H1 (cell line): ENCODE measurements at regions of chr20 and their contacts with region 1.

Region 1: GRCh38 chr20:49610701-49611538 is 43.0 kb upstream of the PTGIS start:
- DNase-seq: peak; percentile 73 to 97
- H3K4me3 ChIP-seq: peak overlapping the region; percentile 8 to 53 (median 46); a peak in 7 of 8 replicates
- H3K27ac ChIP-seq: no peak overlapping the region
- H3K4me1 ChIP-seq: peaks cover 0 to 5% (median 2%) of the 10 kb centered on the region in 4 experiments; a peak in 1 of 7 replicates
- H3K27me3 ChIP-seq: no peaks in the 10 kb centered on the region
- CTCF ChIP-seq: peak; percentile 86 to 99 (median 95)
- EP300 ChIP-seq: 0 out of 3 replicates have a peak, but pooled peaks of 1 of the 2 experiments have one; percentile 31
- POLR2A ChIP-seq: no peak
- RAD21 ChIP-seq: peak; percentile 95 to 98

Region 2: GRCh38 chr20:49278036-49278817 is 332.7 kb before region 1 on chr20 and contains the start of gene ZNFX1:
- CTCF ChIA-PET with region 1: no interaction called
- POLR2A ChIA-PET with region 1: no interaction called
- DNase-seq: peak; percentile 97 to 98
- H3K4me3 ChIP-seq: peak within 1 kb of the TSS; percentile 73 to 97 (median 92)
- H3K27ac ChIP-seq: peak within 1 kb of the TSS; percentile 94
- H3K4me1 ChIP-seq: peaks cover 0 to 8% (median 5%) of the 10 kb centered on the region in 4 experiments; a peak in 3 of 7 replicates
- H3K27me3 ChIP-seq: peaks cover 0 to 1% (median 0%) of the 10 kb centered on the region in 4 experiments; a peak in 1 of 7 replicates
- CTCF ChIP-seq: 0 out of 4 replicates have a peak, but pooled peaks of 1 of the 3 experiments have one; percentile 5
- EP300 ChIP-seq: no peak
- POLR2A ChIP-seq: peak; percentile 100
- RAD21 ChIP-seq: no peak
- total RNA-seq, gene ZNFX1: 11.3 and 13.0 TPM in 2 replicates

Region 3: DNA sequence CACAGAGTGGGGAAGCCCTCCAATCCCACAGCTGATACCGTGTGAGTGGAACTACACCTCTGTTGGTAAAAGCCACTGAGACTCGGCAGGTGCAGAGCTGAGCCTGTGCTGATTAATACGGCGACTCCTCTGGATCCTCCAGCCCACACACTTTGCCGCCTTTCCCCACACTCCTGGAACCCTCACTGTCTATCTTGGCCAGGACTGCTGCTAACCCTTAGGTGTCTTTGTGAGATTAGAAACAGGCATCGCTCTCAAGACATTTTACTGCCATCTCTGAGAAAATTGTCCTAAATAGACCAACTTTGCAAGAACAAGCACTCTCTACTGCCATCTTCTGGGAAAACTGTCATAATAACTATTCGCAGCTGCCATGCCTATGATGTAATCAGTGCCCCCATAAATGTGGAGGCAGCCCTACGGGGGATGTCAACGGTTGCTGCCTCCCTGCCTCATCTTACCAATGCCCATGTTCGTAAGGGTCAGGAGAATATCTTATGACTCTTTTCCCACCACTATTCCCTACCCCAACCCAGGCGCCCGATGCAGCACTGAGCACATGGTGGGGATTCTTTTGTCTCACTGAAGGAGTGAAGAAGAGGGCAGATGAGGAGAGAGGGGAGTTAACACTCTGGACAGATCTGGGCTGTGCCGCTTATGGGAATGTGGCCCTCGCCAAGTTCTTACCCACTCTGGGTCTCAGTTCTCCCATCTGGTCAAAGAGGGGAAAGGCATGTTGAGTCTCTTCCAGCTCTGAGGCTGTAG is 102.3 kb before region 1 on chr20:
- CTCF ChIA-PET with region 1: interaction called, 15 read pairs
- POLR2A ChIA-PET with region 1: no interaction called
- DNase-seq: no peak
- H3K4me3 ChIP-seq: no peak overlapping the region
- H3K27ac ChIP-seq: no peak overlapping the region
- H3K4me1 ChIP-seq: no peaks in the 10 kb centered on the region
- H3K27me3 ChIP-seq: no peaks in the 10 kb centered on the region
- CTCF ChIP-seq: peak in 2 of 3 experiments; percentile 63 to 67; a peak in 3 of 4 replicates
- EP300 ChIP-seq: no peak
- POLR2A ChIP-seq: no peak
- RAD21 ChIP-seq: peak; percentile 62 to 73

Region 4: GRCh38 chr20:49562311-49563014 is 48.5 kb before region 1 on chr20:
- CTCF ChIA-PET with region 1: interaction called, 18 read pairs
- POLR2A ChIA-PET with region 1: interaction called, 3 read pairs
- DNase-seq: peak in 1 of 2 experiments; percentile 65
- H3K4me3 ChIP-seq: no peak overlapping the region
- H3K27ac ChIP-seq: peak overlapping the region; percentile 21; the same call in 1 of the 2 replicates
- H3K4me1 ChIP-seq: peaks cover 9 to 24% (median 15%) of the 10 kb centered on the region in 4 experiments; a peak in 6 of 7 replicates
- H3K27me3 ChIP-seq: no peaks in the 10 kb centered on the region
- CTCF ChIP-seq: no peak
- EP300 ChIP-seq: no peak
- POLR2A ChIP-seq: no peak
- RAD21 ChIP-seq: peak in 1 of 2 experiments; percentile 2; a peak in 1 of 4 replicates

Region 5: DNA sequence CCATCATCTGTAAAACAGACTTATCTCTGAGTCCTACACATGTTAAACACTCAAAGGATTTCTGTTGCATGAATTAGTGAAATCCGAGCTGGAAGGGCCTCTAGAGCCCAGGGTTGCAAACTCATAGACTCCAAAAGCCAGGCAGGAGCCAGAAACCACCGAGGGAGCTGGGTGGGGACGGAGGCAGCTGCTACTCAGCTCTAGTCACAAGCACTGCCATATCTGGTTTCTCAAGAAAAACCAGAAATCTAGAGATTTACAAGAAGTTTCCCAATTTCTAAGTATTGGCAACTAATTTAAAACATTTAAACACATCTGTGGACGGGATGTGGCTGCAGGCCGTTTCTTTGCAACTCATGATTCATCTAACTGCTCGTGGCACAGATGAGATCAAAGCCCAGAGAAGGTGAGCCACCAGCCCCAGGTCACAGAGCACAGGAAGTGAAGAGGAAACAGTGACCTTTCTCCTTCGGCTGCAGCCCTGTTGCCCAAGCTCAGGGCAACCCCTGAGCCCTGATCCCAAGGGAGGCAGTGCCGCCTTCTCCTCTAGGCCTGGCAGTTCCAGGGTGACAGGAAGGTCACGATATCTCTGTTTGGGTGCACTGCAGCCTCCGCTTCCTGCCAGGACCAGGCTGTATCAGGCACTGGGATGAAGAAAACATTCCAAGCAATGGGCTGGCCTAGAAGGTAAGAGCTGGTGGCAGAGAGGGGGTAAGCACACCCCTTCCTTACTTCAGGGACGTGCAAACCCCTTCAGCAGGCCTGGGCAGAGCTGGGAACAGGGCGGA is 16.6 kb before region 1 on chr20:
- CTCF ChIA-PET with region 1: interaction called, 52 read pairs
- POLR2A ChIA-PET with region 1: no interaction called
- DNase-seq: no peak
- H3K4me3 ChIP-seq: no peak overlapping the region
- H3K27ac ChIP-seq: no peak overlapping the region
- H3K4me1 ChIP-seq: no peaks in the 10 kb centered on the region; a peak in 1 of 7 replicates
- H3K27me3 ChIP-seq: no peaks in the 10 kb centered on the region
- CTCF ChIP-seq: no peak
- EP300 ChIP-seq: no peak
- POLR2A ChIP-seq: no peak
- RAD21 ChIP-seq: no peak

Region 6: DNA sequence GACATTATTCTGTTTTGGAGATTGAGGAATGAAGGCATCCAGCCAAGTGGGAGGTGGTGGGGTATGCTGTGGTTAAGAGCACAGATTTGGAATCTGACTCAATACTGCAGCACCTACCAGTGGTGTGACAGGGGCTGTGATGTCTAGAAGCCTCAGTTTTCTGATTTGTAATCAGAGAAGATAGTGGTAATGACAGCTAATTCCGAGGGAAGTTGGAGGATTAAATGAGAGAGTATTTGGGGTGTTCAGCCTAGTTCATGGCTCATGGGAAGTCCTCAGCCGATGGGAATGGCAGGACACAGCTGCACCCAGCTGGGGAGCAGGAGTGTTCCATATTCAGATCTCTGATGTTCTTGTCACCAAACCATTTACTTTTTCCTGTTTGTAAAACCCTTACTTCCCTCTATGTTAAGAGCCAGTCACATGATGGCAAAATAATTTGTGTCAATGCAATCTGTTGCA is 211.0 kb after region 1 on chr20:
- CTCF ChIA-PET with region 1: interaction called, 14 read pairs
- POLR2A ChIA-PET with region 1: no interaction called
- DNase-seq: no peak
- H3K4me3 ChIP-seq: no peak overlapping the region
- H3K27ac ChIP-seq: no peak overlapping the region
- H3K4me1 ChIP-seq: no peaks in the 10 kb centered on the region
- H3K27me3 ChIP-seq: no peaks in the 10 kb centered on the region
- CTCF ChIP-seq: peak in 1 of 3 experiments; percentile 15; a peak in 1 of 4 replicates
- EP300 ChIP-seq: no peak
- POLR2A ChIP-seq: no peak
- RAD21 ChIP-seq: peak; percentile 33 to 41; a peak in 3 of 4 replicates

Region 7: DNA sequence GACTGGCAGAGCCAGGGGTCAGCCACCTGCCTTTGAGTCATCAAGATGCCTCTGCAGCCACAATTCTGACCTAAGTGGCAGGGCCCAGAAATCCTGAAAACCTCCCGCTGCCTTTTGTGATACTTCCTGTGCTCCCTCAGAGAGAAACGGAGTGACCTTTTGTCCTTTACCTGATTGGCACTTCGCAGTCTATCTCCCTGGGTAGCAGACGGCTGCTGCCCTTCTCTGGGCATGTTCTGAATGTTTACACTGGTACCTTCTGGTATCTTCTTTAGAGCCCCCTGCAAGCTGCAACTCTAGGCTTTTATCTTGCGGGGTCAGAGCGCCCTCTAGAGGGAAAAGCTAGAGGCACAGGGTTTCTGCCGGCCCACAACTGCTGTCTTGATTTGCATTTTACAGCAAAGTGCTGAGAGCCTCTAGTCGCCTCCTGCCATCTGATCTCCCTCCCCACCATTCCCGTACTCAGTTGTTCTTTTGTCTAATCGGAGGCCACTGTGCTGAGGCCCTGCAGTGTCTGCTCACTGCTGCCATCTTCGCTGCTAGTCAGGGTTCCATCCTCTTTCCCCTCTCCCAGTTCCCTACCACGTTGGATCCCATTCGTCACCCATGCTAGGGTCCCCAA is 277.5 kb after region 1 on chr20:
- CTCF ChIA-PET with region 1: interaction called, 162 read pairs
- POLR2A ChIA-PET with region 1: interaction called, 6 read pairs
- DNase-seq: peak; percentile 76 to 94
- H3K4me3 ChIP-seq: no peak overlapping the region
- H3K27ac ChIP-seq: no peak overlapping the region
- H3K4me1 ChIP-seq: peaks cover 0 to 19% (median 11%) of the 10 kb centered on the region in 4 experiments; a peak in 5 of 7 replicates
- H3K27me3 ChIP-seq: no peaks in the 10 kb centered on the region
- CTCF ChIP-seq: peak; percentile 70 to 91 (median 88)
- EP300 ChIP-seq: no peak
- POLR2A ChIP-seq: no peak
- RAD21 ChIP-seq: peak; percentile 92